IMR-90 (cell line): ENCODE measurements at regions of chr7 and their contacts with region 1.

Region 1: DNA sequence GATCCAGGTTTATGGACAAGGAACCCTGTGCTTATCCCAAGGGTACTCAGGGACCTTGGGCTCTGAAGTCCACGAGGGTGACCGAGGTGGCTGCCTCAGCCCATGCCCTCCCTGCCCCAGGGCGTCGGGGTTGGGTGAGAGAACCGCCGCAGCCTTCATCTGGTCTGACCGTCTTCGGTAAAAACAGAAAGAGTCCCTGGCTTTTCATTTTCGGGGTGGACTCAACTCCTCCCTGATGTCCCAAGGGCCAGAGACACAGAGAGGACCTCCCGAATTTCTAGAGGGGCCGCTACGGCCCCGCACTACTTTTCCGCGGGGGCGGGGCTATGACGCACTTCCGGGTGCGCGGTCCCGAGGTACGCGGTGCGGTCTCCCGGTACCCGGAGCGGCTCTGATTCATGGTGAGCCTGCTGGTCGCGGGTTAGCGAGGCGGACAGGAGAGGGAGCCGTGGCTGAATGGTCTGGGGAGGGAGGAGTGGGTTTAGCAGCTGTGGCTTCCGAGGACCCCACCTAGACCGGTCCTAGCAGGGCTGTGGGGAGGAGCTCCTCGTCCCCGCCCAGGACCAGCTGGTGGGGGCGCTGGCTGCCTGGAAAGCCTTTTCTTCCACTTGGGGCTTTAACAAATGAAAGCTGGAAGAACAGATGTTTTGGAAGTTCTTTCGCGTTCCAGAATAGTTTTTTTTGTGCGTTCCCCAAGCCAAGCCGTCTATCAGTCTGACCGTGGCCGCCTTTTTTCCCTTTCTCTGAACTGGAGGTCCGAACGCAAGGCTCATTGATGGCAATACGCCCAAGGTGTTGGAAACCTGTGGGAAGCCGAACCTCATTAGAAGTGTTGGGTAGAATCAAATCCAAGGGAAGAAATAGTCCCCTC is at the start of gene ZSCAN21:
- DNase-seq: peak; percentile 84
- ATAC-seq: peak; percentile 94
- H3K4me3 ChIP-seq: peak within 1 kb of the TSS; percentile 81
- H3K27ac ChIP-seq: peak within 1 kb of the TSS; percentile 95
- H3K4me1 ChIP-seq: peaks cover 4% of the 10 kb centered on the region; the same call in 1 of the 2 replicates
- H3K27me3 ChIP-seq: no peaks in the 10 kb centered on the region
- CTCF ChIP-seq: peak; percentile 21; the same call in 1 of the 2 replicates
- POLR2A ChIP-seq: peak; percentile 94
- RAD21 ChIP-seq: peak; percentile 22
- total RNA-seq, gene ZSCAN21: 13.1 and 13.3 TPM in 2 replicates

Region 2: DNA sequence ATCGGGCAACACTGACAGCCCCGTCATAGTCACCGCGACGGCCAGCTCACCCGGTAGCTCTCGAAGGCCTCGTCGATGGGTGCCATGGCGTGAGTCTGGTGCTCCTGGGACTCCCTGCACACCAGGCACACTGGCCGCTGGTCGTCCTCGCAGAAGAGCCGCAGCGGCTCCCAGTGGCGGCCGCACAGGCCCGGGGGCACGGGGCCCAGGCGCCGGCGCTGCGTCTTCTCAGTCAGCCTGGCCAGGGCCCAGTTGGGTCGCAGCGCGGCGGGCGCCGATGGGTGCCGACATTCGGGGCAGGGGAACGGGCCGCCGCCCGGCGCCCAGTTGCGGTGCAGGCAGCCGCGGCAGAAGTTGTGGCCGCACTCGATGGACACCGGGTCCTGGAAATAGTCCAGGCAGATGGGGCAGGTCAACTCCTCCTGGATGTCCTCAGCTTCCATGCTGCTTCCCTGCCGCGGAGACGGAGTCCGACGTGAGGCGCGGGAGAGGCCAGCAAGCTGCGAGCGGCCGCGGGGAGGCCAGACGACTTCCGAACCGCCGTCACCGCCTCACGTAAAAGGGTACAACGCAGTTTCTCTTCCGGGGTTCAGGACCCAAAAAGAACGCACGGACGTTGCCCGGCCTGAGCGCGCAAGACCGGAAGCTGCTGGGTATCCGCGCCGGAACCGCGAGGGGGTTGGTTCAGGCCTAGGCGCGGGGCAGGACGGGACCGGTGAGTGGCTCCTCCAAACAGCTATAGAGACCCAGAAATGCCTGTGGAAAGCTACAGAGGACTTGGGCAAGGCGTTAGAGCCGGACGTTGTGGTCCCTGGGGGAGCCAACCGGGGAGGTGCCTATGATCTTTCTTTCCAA is 130.5 kb before region 1 on chr7 and contains the start of gene TRIM4:
- CTCF ChIA-PET with region 1: no interaction called
- POLR2A ChIA-PET with region 1: no interaction called
- dilution Hi-C with region 1: no loop called
- in situ Hi-C with region 1: loop called (anchors 10 kb)
- intact Hi-C with region 1: loop called (anchors 10 kb)
- DNase-seq: peak; percentile 91
- ATAC-seq: peak; percentile 98
- H3K4me3 ChIP-seq: peak within 1 kb of the TSS; percentile 98
- H3K27ac ChIP-seq: peak within 1 kb of the TSS; percentile 95
- H3K4me1 ChIP-seq: peaks cover 6% of the 10 kb centered on the region
- H3K27me3 ChIP-seq: no peaks in the 10 kb centered on the region
- CTCF ChIP-seq: peak; percentile 29; the same call in 1 of the 2 replicates
- POLR2A ChIP-seq: peak; percentile 84
- RAD21 ChIP-seq: no peak
- total RNA-seq, gene TRIM4: 10.6 and 15.3 TPM in 2 replicates

Region 3: GRCh38 chr7:99990460-99990852 is 59.2 kb before region 1 on chr7:
- CTCF ChIA-PET with region 1: interaction called, 7 read pairs
- POLR2A ChIA-PET with region 1: no interaction called
- dilution Hi-C with region 1: no loop called
- in situ Hi-C with region 1: loop called (anchors 5 kb)
- intact Hi-C with region 1: loop called (anchors 1 kb)
- DNase-seq: no peak
- ATAC-seq: peak; percentile 12
- H3K4me3 ChIP-seq: no peak overlapping the region
- H3K27ac ChIP-seq: no peak overlapping the region
- H3K4me1 ChIP-seq: no peaks in the 10 kb centered on the region
- H3K27me3 ChIP-seq: peaks cover 18% of the 10 kb centered on the region
- CTCF ChIP-seq: no peak
- POLR2A ChIP-seq: no peak
- RAD21 ChIP-seq: no peak

Region 4: GRCh38 chr7:100015232-100016209 is 34.2 kb before region 1 on chr7 and contains the start of gene ZKSCAN1:
- CTCF ChIA-PET with region 1: no interaction called
- POLR2A ChIA-PET with region 1: interaction called, 3 read pairs
- dilution Hi-C with region 1: no loop called
- in situ Hi-C with region 1: no loop called
- intact Hi-C with region 1: loop called (anchors 1 kb)
- DNase-seq: peak; percentile 94
- ATAC-seq: peak; percentile 93
- H3K4me3 ChIP-seq: peak within 1 kb of the TSS; percentile 100
- H3K27ac ChIP-seq: peak within 1 kb of the TSS; percentile 85
- H3K4me1 ChIP-seq: peaks cover 2% of the 10 kb centered on the region; the same call in 1 of the 2 replicates
- H3K27me3 ChIP-seq: peaks cover 8% of the 10 kb centered on the region
- CTCF ChIP-seq: no peak
- POLR2A ChIP-seq: peak; percentile 91
- RAD21 ChIP-seq: no peak
- total RNA-seq, gene ZKSCAN1: 30.3 and 40.7 TPM in 2 replicates

Region 5: GRCh38 chr7:100101016-100101862 is 51.6 kb after region 1 on chr7 and contains the starts of genes AP4M1 and MCM7:
- CTCF ChIA-PET with region 1: no interaction called
- POLR2A ChIA-PET with region 1: no interaction called
- dilution Hi-C with region 1: no loop called
- in situ Hi-C with region 1: no loop called
- intact Hi-C with region 1: loop called (anchors 1 kb)
- DNase-seq: peak; percentile 99
- ATAC-seq: peak; percentile 80
- H3K4me3 ChIP-seq: peak within 1 kb of the TSS; percentile 54
- H3K27ac ChIP-seq: peak within 1 kb of the TSS; percentile 80
- H3K4me1 ChIP-seq: peaks cover 15% of the 10 kb centered on the region
- H3K27me3 ChIP-seq: no peaks in the 10 kb centered on the region
- CTCF ChIP-seq: no peak
- POLR2A ChIP-seq: peak; percentile 76
- RAD21 ChIP-seq: no peak
- total RNA-seq, gene AP4M1: 18.6 and 21.1 TPM in 2 replicates
- total RNA-seq, gene MCM7: 130 and 137 TPM in 2 replicates

Region 6: GRCh38 chr7:100745184-100745583 is 695.5 kb after region 1 on chr7:
- CTCF ChIA-PET with region 1: no interaction called
- POLR2A ChIA-PET with region 1: no interaction called
- dilution Hi-C with region 1: no loop called
- in situ Hi-C with region 1: no loop called
- intact Hi-C with region 1: no loop called
- DNase-seq: peak; percentile 53
- ATAC-seq: peak; percentile 96
- H3K4me3 ChIP-seq: peak overlapping the region; percentile 46
- H3K27ac ChIP-seq: no peak overlapping the region
- H3K4me1 ChIP-seq: no peaks in the 10 kb centered on the region
- H3K27me3 ChIP-seq: peaks cover 13% of the 10 kb centered on the region
- CTCF ChIP-seq: no peak
- POLR2A ChIP-seq: no peak
- RAD21 ChIP-seq: no peak